ENCODE measurements at regions of chr20 and their contacts with region 1.

Region 1: DNA sequence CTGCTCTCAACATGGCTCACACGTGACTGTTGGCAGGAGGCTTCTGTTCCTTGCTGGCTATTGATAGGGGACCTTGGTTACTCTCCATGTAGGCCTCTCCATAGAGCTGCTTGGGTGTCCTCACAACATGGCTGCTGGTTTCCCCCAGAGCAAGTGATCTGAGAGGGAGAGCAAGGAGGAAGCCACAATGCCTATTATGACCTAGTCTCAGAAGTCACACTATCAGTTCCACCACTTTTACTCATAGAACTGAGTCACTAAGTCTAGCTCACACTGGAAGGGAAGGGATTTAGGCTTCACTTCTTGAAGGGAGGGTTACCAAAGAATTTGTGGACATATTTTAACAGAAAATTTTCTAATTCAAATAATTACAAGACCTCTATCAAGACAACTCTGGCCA is 8.7 kb upstream of the NOP56 start:
- DNase-seq: no peak
- ATAC-seq: no peak
- H3K4me3 ChIP-seq: no peak overlapping the region
- H3K27ac ChIP-seq: no peak overlapping the region
- H3K4me1 ChIP-seq: no peaks in the 10 kb centered on the region
- H3K27me3 ChIP-seq: no peaks in the 10 kb centered on the region
- CTCF ChIP-seq: no peak

Region 2: GRCh38 chr20:1685304-1686052 is 958.2 kb before region 1 on chr20:
- intact Hi-C with region 1: no loop called
- DNase-seq: no peak
- ATAC-seq: no peak
- H3K4me3 ChIP-seq: no peak overlapping the region
- H3K27ac ChIP-seq: no peak overlapping the region
- H3K4me1 ChIP-seq: no peaks in the 10 kb centered on the region
- H3K27me3 ChIP-seq: peaks cover 3% of the 10 kb centered on the region
- CTCF ChIP-seq: no peak

Region 3: GRCh38 chr20:2519115-2519809 is 124.4 kb before region 1 on chr20:
- intact Hi-C with region 1: loop called (anchors 10 kb)
- DNase-seq: no peak
- ATAC-seq: no peak
- H3K4me3 ChIP-seq: no peak overlapping the region
- H3K27ac ChIP-seq: no peak overlapping the region
- H3K4me1 ChIP-seq: peaks cover 2% of the 10 kb centered on the region
- H3K27me3 ChIP-seq: no peaks in the 10 kb centered on the region
- CTCF ChIP-seq: no peak

Measured in upper lobe of right lung (tissue), 1 donor.